ENCODE measurements at regions of chr3 and their contacts with region 1.

Region 1: GRCh38 chr3:98817547-98818041 is 54.5 kb downstream of the ST3GAL6 start:
- H3K4me3 ChIP-seq: no peak overlapping the region
- H3K27ac ChIP-seq: no peak overlapping the region
- H3K4me1 ChIP-seq: no peaks in the 10 kb centered on the region
- CTCF ChIP-seq: no peak

Region 2: GRCh38 chr3:98406034-98406433 is 411.6 kb before region 1 on chr3:
- CTCF ChIA-PET with region 1: no interaction called
- POLR2A ChIA-PET with region 1: no interaction called
- H3K4me3 ChIP-seq: no peak overlapping the region
- H3K27ac ChIP-seq: no peak overlapping the region
- H3K4me1 ChIP-seq: no peaks in the 10 kb centered on the region
- CTCF ChIP-seq: no peak

Region 3: DNA sequence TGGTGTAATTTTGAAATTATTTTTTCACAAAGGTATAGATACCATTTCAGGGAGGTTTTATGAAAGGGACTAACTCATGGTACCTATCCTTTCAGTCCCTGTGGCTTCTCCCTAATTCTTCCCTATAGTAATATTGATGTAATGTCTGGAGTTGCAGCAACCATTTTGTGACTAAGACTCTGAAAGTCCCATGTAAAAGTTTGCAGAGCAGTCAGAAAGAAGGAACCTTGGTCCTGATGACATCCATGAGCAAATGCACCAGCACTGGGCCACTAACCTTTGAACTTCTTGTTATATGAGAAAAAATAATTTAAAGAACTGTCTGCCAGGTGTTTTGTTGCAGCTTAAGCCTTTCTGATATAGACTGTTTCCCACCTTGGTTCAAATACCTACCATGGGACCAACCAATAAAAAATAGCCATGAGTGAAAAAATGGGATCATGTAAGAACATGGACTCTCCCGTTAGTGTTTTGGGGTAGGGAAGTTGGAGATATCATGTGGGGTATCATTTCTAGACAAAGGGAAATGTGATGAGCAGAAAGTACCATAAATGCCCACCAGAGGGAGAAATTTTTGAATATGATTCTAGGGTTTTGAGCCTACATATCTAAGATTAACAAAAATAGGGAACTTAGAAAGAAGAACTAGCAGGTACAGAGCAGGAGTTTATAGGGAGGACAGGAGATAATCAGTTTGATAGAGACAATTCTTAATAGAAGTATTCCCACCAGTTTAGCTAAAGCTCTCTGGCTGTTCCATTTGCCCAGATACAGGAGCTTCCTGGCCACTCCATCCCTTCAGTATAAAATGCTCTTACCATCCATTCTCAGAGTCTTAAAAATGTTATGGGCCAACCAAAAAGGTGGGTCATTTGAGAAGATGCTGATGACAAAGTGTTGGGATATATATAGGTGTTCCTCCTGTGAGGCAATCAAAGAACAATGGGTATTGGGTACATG is 220.8 kb before region 1 on chr3:
- CTCF ChIA-PET with region 1: interaction called, 79 read pairs
- POLR2A ChIA-PET with region 1: no interaction called
- H3K4me3 ChIP-seq: no peak overlapping the region
- H3K27ac ChIP-seq: no peak overlapping the region
- H3K4me1 ChIP-seq: no peaks in the 10 kb centered on the region
- CTCF ChIP-seq: no peak

Region 4: DNA sequence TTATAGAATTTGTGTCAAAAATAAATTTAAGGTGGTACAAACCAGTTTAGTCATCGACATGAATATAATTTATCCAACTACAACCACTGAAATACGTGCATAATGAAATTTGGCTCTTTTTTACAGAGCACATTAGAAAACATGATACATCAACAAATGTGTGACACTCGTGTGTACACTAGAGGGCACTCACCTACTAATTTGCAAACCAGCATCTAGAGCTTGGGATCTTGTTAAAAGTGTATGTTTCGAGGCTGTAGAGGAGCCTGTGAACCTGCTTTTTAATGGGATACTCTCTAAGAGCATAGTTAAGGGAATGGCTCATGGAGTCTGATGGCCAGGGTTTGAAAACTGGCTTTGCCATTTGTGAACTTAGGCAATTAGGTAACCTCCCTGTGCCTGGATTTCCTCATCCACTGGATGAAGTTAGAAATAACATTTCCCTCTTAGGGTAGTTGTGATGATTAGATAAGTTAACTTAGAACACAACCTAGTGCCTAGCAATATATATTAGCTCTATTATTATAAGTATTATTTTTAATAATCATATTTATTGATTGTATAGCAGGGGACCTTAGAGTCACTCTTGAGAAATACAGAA is 215.4 kb before region 1 on chr3:
- CTCF ChIA-PET with region 1: interaction called, 79 read pairs
- POLR2A ChIA-PET with region 1: no interaction called
- H3K4me3 ChIP-seq: no peak overlapping the region
- H3K27ac ChIP-seq: no peak overlapping the region
- H3K4me1 ChIP-seq: no peaks in the 10 kb centered on the region
- CTCF ChIP-seq: peak; percentile 23; the same call in 1 of the 2 replicates

Region 5: GRCh38 chr3:98786364-98787006 is 31.1 kb before region 1 on chr3:
- CTCF ChIA-PET with region 1: no interaction called
- POLR2A ChIA-PET with region 1: no interaction called
- H3K4me3 ChIP-seq: no peak overlapping the region
- H3K27ac ChIP-seq: no peak overlapping the region
- H3K4me1 ChIP-seq: no peaks in the 10 kb centered on the region
- CTCF ChIP-seq: no peak

Region 6: GRCh38 chr3:98994128-98994762 is 176.7 kb after region 1 on chr3:
- CTCF ChIA-PET with region 1: interaction called, 138 read pairs
- POLR2A ChIA-PET with region 1: interaction called, 3 read pairs
- H3K4me3 ChIP-seq: no peak overlapping the region
- H3K27ac ChIP-seq: no peak overlapping the region
- H3K4me1 ChIP-seq: no peaks in the 10 kb centered on the region
- CTCF ChIP-seq: no peak